ENCODE measurements at regions of chr1 and their contacts with region 1.

Region 1: GRCh38 chr1:151888972-151889570 is 20.2 kb downstream of the THEM4 start:
- DNase-seq: no peak
- ATAC-seq: no peak
- H3K4me3 ChIP-seq: no peak overlapping the region
- H3K27ac ChIP-seq: no peak overlapping the region
- H3K4me1 ChIP-seq: no peaks in the 10 kb centered on the region
- H3K27me3 ChIP-seq: no peaks in the 10 kb centered on the region
- CTCF ChIP-seq: peak; percentile 38
- EP300 ChIP-seq: no peak
- POLR2A ChIP-seq: no peak
- RAD21 ChIP-seq: no peak

Region 2: GRCh38 chr1:152001391-152002249 is 112.5 kb after region 1 on chr1:
- CTCF ChIA-PET with region 1: interaction called, 3 read pairs
- POLR2A ChIA-PET with region 1: no interaction called
- in situ Hi-C with region 1: no loop called
- intact Hi-C with region 1: loop called (anchors 2 kb)
- DNase-seq: peak; percentile 72
- ATAC-seq: peak; percentile 74
- H3K4me3 ChIP-seq: no peak overlapping the region
- H3K27ac ChIP-seq: no peak overlapping the region
- H3K4me1 ChIP-seq: peaks cover 11% of the 10 kb centered on the region
- H3K27me3 ChIP-seq: peaks cover 0 to 5% of the 10 kb centered on the region in 2 experiments; a peak in 2 of 5 replicates
- CTCF ChIP-seq: peak; percentile 81
- EP300 ChIP-seq: no peak
- POLR2A ChIP-seq: no peak
- RAD21 ChIP-seq: peak; percentile 84